OCI-LY7 (cell line): ENCODE measurements at regions of chr7 and their contacts with region 1.

Region 1: GRCh38 chr7:131507592-131508331 is 48.7 kb downstream of the PODXL start:
- DNase-seq: peak; percentile 73
- H3K4me3 ChIP-seq: no peak overlapping the region
- H3K27ac ChIP-seq: no peak overlapping the region
- H3K4me1 ChIP-seq: peaks cover 4% of the 10 kb centered on the region
- CTCF ChIP-seq: peak; percentile 92

Region 2: GRCh38 chr7:130845581-130846085 is 662.1 kb before region 1 on chr7:
- CTCF ChIA-PET with region 1: no interaction called
- POLR2A ChIA-PET with region 1: no interaction called
- intact Hi-C with region 1: loop called (anchors 10 kb)
- DNase-seq: no peak
- H3K4me3 ChIP-seq: no peak overlapping the region
- H3K27ac ChIP-seq: no peak overlapping the region
- H3K4me1 ChIP-seq: peaks cover 19% of the 10 kb centered on the region
- CTCF ChIP-seq: no peak

Region 3: GRCh38 chr7:131556052-131556908 is 48.5 kb after region 1 on chr7 and contains the start of gene PODXL:
- CTCF ChIA-PET with region 1: no interaction called
- POLR2A ChIA-PET with region 1: no interaction called
- intact Hi-C with region 1: no loop called
- DNase-seq: peak; percentile 50
- H3K4me3 ChIP-seq: peak within 1 kb of the TSS; percentile 58
- H3K27ac ChIP-seq: no peak within 1 kb of the TSS
- H3K4me1 ChIP-seq: peaks cover 21% of the 10 kb centered on the region
- CTCF ChIP-seq: no peak
- total RNA-seq, gene PODXL: 0.31 and 0.32 TPM in 2 replicates

Region 4: DNA sequence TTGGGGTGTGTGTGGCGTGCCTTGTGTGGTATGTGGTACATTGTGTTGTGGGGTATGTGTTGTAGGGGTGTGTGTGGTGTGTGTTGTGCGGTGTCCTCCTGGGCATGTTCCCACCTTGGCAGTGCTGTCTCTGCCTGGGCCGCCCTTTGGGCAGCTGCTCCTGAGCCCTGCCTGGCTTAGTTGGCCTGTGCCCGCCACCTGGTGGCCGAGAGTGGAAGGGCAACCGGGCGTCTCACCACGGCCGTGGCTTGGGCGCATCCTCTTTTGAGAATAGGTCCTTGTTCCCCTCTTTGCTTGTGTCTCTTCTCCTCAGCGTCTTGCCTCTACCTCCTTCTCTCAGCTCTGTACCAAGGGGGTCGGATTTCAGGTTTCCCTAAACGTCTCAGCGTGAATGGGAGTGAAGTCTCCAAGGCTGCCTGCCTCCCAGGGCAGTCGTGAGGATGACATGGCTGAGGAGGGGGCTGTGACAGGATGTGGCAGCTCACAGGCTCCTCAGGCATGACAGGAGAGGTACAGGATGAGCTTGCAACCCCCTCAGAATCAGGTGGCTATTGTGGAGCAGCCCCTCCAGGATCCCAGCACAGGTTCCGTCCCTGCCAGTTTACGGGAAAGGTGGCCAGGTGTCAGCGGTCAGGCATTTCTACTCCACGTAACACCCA is 147.0 kb after region 1 on chr7:
- CTCF ChIA-PET with region 1: no interaction called
- POLR2A ChIA-PET with region 1: no interaction called
- intact Hi-C with region 1: loop called (anchors 1 kb)
- DNase-seq: peak; percentile 73
- H3K4me3 ChIP-seq: no peak overlapping the region
- H3K27ac ChIP-seq: no peak overlapping the region
- H3K4me1 ChIP-seq: no peaks in the 10 kb centered on the region
- CTCF ChIP-seq: peak; percentile 79